ENCODE measurements at regions of chr5 and their contacts with region 1.

Region 1: GRCh38 chr5:140284013-140284412 is 18.9 kb downstream of the PFDN1 start:
- DNase-seq: no peak
- ATAC-seq: peak in 1 of 2 donors; percentile 23
- H3K4me3 ChIP-seq: no peak overlapping the region
- H3K27ac ChIP-seq: peak overlapping the region in 3 of 4 donors; percentile 8 to 31 (median 17)
- H3K4me1 ChIP-seq: peaks cover 40 to 43% of the 10 kb centered on the region in 2 donors
- H3K27me3 ChIP-seq: no peaks in the 10 kb centered on the region
- CTCF ChIP-seq: no peak
- POLR2A ChIP-seq: no peak

Region 2: DNA sequence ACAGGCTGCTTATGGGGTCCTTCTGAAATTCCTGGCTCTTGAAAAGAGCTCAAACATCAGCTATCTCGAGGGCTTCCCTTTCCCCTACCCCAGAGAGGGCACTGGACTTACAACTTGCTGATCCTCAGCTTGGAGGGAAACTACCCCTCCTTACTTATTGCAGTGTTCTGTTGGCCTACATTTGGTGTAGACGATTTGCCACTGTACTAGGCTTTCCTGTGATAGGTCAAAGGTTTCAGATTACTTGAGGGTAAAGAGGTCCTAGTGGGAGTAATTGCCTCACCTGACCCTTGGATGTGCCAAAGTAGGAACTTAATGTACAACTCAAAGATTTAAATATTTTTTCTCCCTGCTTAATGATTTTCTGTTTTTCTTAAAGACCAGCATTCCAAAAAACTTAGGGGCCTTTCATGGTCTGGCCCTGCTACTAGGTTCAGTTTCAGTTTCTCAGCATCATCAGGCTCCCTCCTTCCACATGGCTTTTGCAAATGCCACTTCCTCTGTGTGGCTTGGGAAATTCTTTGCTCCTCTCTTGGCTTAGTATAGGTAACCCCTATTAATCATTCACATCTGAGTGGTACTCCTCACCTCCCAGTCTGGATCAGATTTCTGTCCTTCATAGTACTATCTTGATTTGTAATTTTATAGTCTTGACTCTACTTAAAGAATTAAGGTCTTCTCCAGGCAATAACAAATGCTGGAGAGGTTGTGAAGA is 76.6 kb before region 1 on chr5:
- in situ Hi-C with region 1: no loop called
- intact Hi-C with region 1: no loop called
- DNase-seq: no peak
- ATAC-seq: peak in 1 of 2 donors; percentile 51
- H3K4me3 ChIP-seq: no peak overlapping the region
- H3K27ac ChIP-seq: peak overlapping the region; percentile 72 to 86 (median 82)
- H3K4me1 ChIP-seq: peaks cover 50 to 52% of the 10 kb centered on the region in 2 donors
- H3K27me3 ChIP-seq: no peaks in the 10 kb centered on the region
- CTCF ChIP-seq: no peak
- POLR2A ChIP-seq: no peak

Region 3: GRCh38 chr5:140261403-140262171 is 22.4 kb before region 1 on chr5:
- in situ Hi-C with region 1: no loop called
- intact Hi-C with region 1: loop called (anchors 2 kb)
- DNase-seq: peak; percentile 85 to 89
- ATAC-seq: peak; percentile 97 to 98
- H3K4me3 ChIP-seq: peak overlapping the region; percentile 21 to 32 (median 28)
- H3K27ac ChIP-seq: peak overlapping the region; percentile 86 to 95 (median 89)
- H3K4me1 ChIP-seq: peaks cover 31 to 60% of the 10 kb centered on the region in 2 donors
- H3K27me3 ChIP-seq: no peaks in the 10 kb centered on the region
- CTCF ChIP-seq: no peak
- POLR2A ChIP-seq: peak in 1 of 2 donors; percentile 6

Region 4: GRCh38 chr5:141369994-141370848 is 1086.2 kb after region 1 on chr5 and contains the start of gene PCDHGB3:
- in situ Hi-C with region 1: no loop called
- intact Hi-C with region 1: no loop called
- DNase-seq: peak in 1 of 2 donors; percentile 45
- ATAC-seq: peak; percentile 62 to 87
- H3K4me3 ChIP-seq: peak within 1 kb of the TSS; percentile 7 to 50 (median 37)
- H3K27ac ChIP-seq: peak within 1 kb of the TSS in 1 of 4 donors; percentile 16
- H3K4me1 ChIP-seq: peaks cover 0 to 4% of the 10 kb centered on the region in 2 donors
- H3K27me3 ChIP-seq: peaks cover 0 to 21% (median 20%) of the 10 kb centered on the region in 3 donors
- CTCF ChIP-seq: peak in 2 of 5 experiments; percentile 19 to 43
- POLR2A ChIP-seq: no peak
- total RNA-seq, gene PCDHGB3: 0.29 to 2.0 (median 1.2) TPM